BJ (cell line): ENCODE measurements at regions of chr11 and their contacts with region 1.

Region 1: DNA sequence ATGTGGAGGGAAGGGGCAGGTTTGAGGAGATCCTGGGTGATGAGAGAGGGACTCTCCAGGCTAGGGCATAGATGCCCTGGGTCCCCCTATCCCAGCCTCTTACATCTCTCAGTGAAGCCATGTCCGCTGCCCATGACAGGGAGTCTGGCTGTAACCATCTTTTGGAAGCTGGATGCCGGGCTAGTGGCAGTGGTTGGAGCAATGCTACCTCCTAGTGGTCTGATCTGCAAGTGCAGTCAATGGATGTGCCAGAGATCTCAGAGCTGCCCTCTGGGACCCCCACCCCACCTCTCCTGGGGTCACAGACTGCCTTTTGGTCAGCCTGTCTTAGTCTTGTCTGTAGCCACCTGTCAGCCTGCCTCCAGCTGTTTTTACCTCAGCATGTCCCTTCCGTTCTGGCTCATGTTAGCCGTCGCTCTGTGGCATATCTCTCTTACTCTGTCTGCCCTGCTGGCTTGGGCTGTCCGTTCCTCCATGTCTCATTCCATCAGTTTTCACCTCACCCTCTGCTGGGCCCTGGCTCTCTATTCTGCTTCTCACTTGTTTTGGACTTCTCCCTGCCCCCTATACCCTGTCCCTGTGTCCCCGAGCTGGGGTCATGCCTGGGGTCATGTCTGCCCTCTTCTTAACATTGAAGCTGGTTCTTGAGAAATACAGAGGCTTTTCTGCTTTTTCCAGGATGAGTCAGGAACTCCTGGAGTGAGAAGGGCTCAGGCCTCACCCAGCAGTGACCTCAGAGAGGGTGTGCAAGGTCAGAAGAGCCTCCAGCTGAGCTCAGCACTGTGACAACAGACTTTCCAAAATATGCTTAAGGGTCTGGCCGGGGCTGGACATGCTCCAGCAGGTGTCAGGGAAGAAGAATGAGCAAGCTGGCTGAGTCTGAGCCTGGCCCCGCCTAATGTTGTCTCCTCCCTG is 52.0 kb upstream of the THY1 start:
- DNase-seq: peak; percentile 56
- H3K4me3 ChIP-seq: no peak overlapping the region
- H3K27me3 ChIP-seq: peaks cover 2% of the 10 kb centered on the region
- CTCF ChIP-seq: peak; percentile 93

Region 2: DNA sequence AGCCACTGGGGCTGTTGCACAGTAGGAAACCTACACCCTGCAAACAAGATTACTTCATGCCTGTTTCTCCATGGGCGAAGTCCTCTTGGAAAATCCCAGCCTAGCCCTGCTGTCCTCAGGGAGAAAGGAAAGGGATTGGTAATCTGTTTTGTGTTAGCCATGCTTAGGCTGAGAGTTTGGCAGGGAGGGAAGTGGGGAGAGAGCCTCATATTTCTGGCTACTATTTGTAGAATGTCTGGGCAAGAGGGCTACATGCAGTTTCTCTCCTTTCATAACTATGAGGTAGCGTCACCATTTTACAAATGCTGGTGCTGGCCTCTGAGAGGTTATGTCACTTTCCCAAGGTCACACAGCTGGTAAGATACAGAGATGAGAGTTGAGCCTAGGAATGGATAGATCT is 127.7 kb before region 1 on chr11:
- CTCF ChIA-PET with region 1: interaction called, 16 read pairs
- POLR2A ChIA-PET with region 1: interaction called, 3 read pairs
- DNase-seq: peak; percentile 61
- H3K4me3 ChIP-seq: no peak overlapping the region
- H3K27me3 ChIP-seq: peaks cover 20% of the 10 kb centered on the region
- CTCF ChIP-seq: no peak

Region 3: DNA sequence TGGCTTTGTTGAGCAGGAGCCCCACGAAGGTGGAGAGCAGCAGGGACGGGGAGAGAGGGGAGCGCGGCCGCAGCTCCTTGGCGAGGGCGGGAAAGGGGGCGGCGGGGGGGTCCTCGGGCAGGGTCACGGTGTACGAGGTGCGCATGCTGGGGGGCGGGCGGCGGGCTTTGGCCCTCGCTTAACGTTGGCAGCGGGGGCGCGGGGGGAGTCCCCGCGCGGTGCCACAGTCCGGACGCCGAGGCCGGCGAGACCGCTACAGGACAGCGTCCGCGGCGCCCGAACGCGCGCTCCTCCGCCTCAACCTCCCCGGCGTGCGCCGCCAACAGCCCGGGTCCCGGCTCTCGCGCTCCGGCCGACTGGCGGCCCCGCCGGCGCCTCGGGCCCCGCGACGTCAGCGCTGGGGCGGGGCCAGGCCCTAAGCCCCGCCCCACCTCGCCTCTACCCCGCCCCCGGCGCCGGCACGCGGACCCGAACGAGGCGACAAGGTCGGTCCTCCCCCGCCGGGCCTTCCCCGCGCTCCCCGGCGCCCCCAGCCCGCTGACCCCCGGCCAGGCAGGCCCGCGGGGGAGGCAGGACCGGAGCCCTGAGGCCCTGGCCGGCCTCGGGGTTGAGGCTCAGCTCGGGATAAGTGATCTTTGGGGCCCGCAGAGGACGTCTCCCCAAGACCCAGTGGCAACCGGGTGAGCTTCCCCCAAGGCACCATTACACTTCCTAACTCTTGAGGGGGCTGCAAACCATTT is 110.9 kb before region 1 on chr11:
- CTCF ChIA-PET with region 1: interaction called, 26 read pairs
- POLR2A ChIA-PET with region 1: no interaction called
- DNase-seq: no peak
- H3K4me3 ChIP-seq: peak overlapping the region; percentile 32
- H3K27me3 ChIP-seq: no peaks in the 10 kb centered on the region
- CTCF ChIP-seq: no peak

Region 4: GRCh38 chr11:119381181-119381988 is 93.6 kb before region 1 on chr11 and contains the start of gene USP2:
- CTCF ChIA-PET with region 1: interaction called, 106 read pairs
- POLR2A ChIA-PET with region 1: no interaction called
- DNase-seq: peak; percentile 90
- H3K4me3 ChIP-seq: peak within 1 kb of the TSS; percentile 47
- H3K27me3 ChIP-seq: peaks cover 5% of the 10 kb centered on the region; the same call in 1 of the 2 replicates
- CTCF ChIP-seq: peak; percentile 89
- polyA plus RNA-seq, gene USP2: 0.27 and 0.71 TPM in 2 replicates

Region 5: DNA sequence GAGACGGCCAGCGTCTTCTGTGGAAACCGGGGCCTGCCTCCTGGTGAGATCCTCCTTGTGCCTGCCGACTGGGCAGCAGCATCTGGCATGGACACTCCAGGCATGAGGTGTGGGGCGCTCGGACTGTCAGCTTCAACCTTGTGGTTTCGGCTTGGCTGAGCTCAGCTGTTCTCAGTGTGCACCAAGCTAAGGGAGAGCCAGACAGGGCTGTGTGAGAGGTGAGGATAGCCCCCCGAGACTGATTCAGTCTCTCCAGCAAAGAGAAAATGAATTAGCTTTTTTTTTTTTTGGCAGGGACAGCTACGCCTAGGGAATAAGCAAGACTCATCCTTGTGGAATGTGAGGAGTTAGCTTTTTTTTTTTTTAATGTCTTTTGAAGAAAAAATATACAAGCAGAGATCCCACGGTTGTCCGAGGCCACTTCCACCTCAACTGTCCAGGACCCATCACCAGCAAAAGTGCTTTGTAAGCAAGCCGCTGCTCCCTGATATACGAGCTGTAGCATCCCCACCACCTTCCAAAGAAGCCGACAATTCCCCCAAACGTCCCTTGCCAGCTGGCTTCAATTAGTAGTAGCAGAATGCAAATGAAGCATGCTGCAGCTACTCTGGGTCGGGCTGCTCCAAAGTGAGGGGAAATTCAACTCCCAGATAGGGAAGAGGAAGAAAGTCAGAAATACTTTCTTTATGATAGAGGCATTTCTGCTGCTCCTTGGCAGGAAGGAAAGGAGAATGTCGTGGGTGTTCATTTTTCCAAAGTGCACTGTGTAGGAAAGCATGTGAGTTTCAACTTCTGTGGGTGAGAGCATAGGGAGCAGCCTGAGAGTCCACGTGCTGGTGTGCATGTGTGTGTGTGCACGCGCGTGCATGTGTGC is 42.2 kb before region 1 on chr11:
- CTCF ChIA-PET with region 1: interaction called, 13 read pairs
- POLR2A ChIA-PET with region 1: interaction called, 4 read pairs
- DNase-seq: peak; percentile 56
- H3K4me3 ChIP-seq: peak overlapping the region; percentile 27
- H3K27me3 ChIP-seq: no peaks in the 10 kb centered on the region
- CTCF ChIP-seq: no peak

Region 6: DNA sequence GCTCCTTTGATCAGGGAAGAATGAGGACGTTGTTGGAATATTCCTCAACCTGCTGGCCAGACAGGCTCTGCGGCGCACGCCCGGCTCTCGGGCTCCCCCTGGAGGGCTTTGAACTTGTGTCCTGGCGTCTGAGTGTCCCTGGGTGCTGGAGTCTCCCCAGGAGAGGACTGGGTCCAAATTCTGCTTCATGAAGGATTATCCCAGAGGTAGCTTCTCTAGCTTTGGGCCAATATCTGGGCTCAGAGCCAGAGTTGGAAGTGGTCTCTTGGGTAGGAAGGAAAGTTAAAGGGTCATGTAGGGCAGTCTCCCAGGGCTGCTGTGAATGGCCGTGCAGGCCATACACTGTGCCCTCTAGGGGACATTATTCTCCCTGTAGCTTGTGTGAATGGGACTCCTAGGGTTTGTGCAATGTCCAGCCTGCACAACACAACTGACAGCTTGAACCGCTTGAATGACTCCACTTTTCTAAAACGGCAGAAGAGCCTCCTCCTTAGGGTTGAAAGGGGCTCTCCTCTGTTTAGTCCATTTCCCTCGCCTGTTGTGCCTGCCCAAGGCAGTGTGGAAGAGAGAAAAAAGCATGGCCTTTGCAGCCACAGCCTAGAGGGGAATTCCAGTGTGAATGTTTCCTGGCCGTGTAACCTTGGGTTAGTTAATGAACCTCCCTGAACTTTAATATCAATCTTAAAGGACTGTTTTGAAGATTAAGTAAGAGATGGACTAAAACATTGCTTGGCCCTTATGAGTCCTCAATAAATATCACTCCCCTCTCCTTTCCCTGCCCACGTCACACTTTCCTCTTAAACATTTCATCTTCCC is 59.2 kb after region 1 on chr11:
- CTCF ChIA-PET with region 1: interaction called, 45 read pairs
- POLR2A ChIA-PET with region 1: no interaction called
- DNase-seq: no peak
- H3K4me3 ChIP-seq: no peak overlapping the region
- H3K27me3 ChIP-seq: peaks cover 9% of the 10 kb centered on the region
- CTCF ChIP-seq: peak; percentile 93

Region 7: DNA sequence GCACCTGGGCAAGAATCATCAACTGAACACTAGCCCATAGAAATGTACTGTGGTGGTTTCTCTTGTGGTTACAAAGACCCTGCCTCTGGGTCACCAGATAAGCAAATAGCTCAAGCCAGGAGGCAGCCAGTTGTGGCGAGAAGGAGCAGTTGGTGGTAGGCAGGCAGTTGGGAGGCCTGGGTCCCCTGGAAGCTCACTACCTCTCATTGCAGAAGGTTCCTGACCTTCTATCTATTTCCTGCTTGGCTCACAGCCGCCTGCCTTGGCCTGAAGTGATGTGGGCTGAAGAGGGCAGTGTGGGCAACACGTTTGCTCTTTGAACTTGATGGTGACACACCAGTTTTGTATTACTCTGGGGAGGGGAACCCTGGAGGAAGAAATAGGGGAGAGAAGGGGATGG is 219.4 kb after region 1 on chr11:
- CTCF ChIA-PET with region 1: no interaction called
- POLR2A ChIA-PET with region 1: no interaction called
- DNase-seq: no peak
- H3K4me3 ChIP-seq: no peak overlapping the region
- H3K27me3 ChIP-seq: no peaks in the 10 kb centered on the region
- CTCF ChIP-seq: no peak